Sigmoid colon (tissue), 7 donors: ENCODE measurements at regions of chrX and their contacts with region 1.

Region 1: DNA sequence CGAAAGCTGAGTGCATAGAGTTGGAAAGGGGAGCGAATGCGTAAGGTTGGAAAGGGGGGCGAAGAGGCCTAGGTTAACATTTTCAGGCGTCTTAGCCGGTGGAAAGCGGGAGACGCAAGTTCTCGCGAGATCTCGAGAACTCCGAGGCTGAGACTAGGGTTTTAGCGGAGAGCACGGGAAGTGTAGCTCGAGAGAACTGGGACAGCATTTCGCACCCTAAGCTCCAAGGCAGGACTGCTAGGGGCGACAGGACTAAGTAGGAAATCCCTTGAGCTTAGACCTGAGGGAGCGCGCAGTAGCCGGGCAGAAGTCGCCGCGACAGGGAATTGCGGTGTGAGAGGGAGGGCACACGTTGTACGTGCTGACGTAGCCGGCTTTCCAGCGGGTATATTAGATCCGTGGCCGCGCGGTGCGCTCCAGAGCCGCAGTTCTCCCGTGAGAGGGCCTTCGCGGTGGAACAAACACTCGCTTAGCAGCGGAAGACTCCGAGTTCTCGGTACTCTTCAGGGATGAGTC is at the start of gene DDX3X:
- DNase-seq: peak; percentile 97
- H3K4me3 ChIP-seq: peak within 1 kb of the TSS; percentile 80 to 99 (median 94)
- H3K27ac ChIP-seq: peak within 1 kb of the TSS; percentile 98 to 100 (median 100)
- H3K4me1 ChIP-seq: peaks cover 0 to 46% (median 17%) of the 10 kb centered on the region in 4 donors
- H3K27me3 ChIP-seq: no peaks in the 10 kb centered on the region
- CTCF ChIP-seq: peak in 1 of 4 experiments; percentile 38
- EP300 ChIP-seq: peak in 1 of 4 donors; percentile 7
- POLR2A ChIP-seq: peak; percentile 95 to 98
- total RNA-seq, gene DDX3X: 146 to 218 (median 214) TPM

Region 2: GRCh38 chrX:40933132-40933705 is 400.6 kb before region 1 on chrX:
- intact Hi-C with region 1: no loop called
- DNase-seq: no peak
- H3K4me3 ChIP-seq: peak overlapping the region in 3 of 4 donors; percentile 12 to 28 (median 20)
- H3K27ac ChIP-seq: peak overlapping the region; percentile 44 to 76 (median 65)
- H3K4me1 ChIP-seq: peaks cover 0 to 8% (median 0%) of the 10 kb centered on the region in 4 donors
- H3K27me3 ChIP-seq: no peaks in the 10 kb centered on the region
- CTCF ChIP-seq: no peak
- EP300 ChIP-seq: no peak
- POLR2A ChIP-seq: no peak

Region 3: DNA sequence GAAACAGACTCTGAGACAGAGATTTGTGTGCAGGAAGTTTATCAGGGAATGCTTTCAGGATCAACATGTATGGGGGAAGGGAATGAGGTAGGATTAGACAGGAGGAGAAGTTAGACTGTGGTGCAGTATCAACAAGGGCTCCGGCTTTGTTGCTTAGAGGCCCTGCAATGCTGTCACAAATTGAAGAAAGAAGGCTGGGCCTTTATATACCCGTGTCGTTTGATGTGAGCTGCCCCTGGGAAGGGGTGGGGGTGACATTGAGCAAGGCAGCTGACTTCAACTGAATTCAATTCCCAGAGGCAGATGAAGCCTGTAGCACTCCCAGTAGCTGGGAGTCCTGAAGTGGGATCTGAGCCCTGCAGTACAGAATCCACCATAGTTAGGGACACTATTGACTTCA is 278.1 kb before region 1 on chrX:
- intact Hi-C with region 1: no loop called
- DNase-seq: no peak
- H3K4me3 ChIP-seq: no peak overlapping the region
- H3K27ac ChIP-seq: no peak overlapping the region
- H3K4me1 ChIP-seq: no peaks in the 10 kb centered on the region
- H3K27me3 ChIP-seq: no peaks in the 10 kb centered on the region
- CTCF ChIP-seq: no peak
- EP300 ChIP-seq: no peak
- POLR2A ChIP-seq: no peak

Region 4: GRCh38 chrX:41275661-41276609 is 57.9 kb before region 1 on chrX:
- intact Hi-C with region 1: loop called (anchors 5 kb)
- DNase-seq: peak; percentile 86
- H3K4me3 ChIP-seq: peak overlapping the region; percentile 33 to 54 (median 51)
- H3K27ac ChIP-seq: peak overlapping the region; percentile 63 to 83 (median 70)
- H3K4me1 ChIP-seq: peaks cover 0 to 20% (median 7%) of the 10 kb centered on the region in 4 donors
- H3K27me3 ChIP-seq: no peaks in the 10 kb centered on the region
- CTCF ChIP-seq: peak in 2 of 4 experiments; percentile 23 to 30
- EP300 ChIP-seq: no peak
- POLR2A ChIP-seq: no peak

Region 5: GRCh38 chrX:41441934-41442823 is 108.4 kb after region 1 on chrX:
- intact Hi-C with region 1: loop called (anchors 2 kb)
- DNase-seq: peak; percentile 91
- H3K4me3 ChIP-seq: peak overlapping the region; percentile 11 to 41 (median 39)
- H3K27ac ChIP-seq: peak overlapping the region; percentile 59 to 63 (median 61)
- H3K4me1 ChIP-seq: peaks cover 0 to 9% (median 0%) of the 10 kb centered on the region in 4 donors
- H3K27me3 ChIP-seq: no peaks in the 10 kb centered on the region
- CTCF ChIP-seq: peak; percentile 19 to 52 (median 42)
- EP300 ChIP-seq: peak in 2 of 4 donors; percentile 17 to 35
- POLR2A ChIP-seq: no peak

Region 6: GRCh38 chrX:41923257-41923969 is 589.6 kb after region 1 on chrX and contains the start of gene CASK:
- intact Hi-C with region 1: loop called (anchors 5 kb)
- DNase-seq: peak; percentile 96
- H3K4me3 ChIP-seq: peak within 1 kb of the TSS; percentile 43 to 66 (median 60)
- H3K27ac ChIP-seq: peak within 1 kb of the TSS; percentile 85 to 89 (median 86)
- H3K4me1 ChIP-seq: peaks cover 0 to 6% (median 0%) of the 10 kb centered on the region in 4 donors
- H3K27me3 ChIP-seq: no peaks in the 10 kb centered on the region
- CTCF ChIP-seq: no peak
- EP300 ChIP-seq: no peak
- POLR2A ChIP-seq: no peak
- total RNA-seq, gene CASK: 18.4 to 37.1 (median 25.3) TPM